ENCODE measurements at regions of chr12 and their contacts with region 1.

Region 1: GRCh38 chr12:116924558-116925453 is 14.1 kb downstream of the FBXW8 start:
- DNase-seq: peak; percentile 66
- H3K4me3 Mint-ChIP-seq: no peak overlapping the region
- H3K27ac Mint-ChIP-seq: no peak overlapping the region
- H3K4me1 Mint-ChIP-seq: peaks cover 42% of the 10 kb centered on the region
- H3K27me3 Mint-ChIP-seq: peaks cover 56% of the 10 kb centered on the region

Region 2: DNA sequence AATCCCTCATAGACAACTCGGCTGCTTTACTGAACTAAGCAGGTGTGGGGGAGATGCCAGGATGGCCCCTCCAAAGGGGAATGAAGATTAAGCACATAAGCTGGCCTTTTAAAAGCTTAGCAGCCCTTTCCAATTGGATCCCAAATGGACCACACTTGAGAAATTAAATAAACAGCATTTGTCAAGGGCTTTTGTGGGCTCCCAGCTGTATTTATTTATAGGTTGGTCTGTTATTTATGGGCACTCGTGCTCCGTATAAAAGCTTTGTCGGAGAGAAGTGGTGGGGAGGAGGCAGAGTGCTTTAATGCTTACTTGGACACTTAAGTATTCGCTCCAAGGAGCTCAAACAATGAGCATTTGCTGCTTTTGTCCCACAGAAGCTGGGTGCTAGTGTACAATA is 1227.5 kb before region 1 on chr12:
- intact Hi-C with region 1: no loop called
- DNase-seq: no peak
- H3K4me3 Mint-ChIP-seq: no peak overlapping the region
- H3K27ac Mint-ChIP-seq: no peak overlapping the region
- H3K4me1 Mint-ChIP-seq: no peaks in the 10 kb centered on the region
- H3K27me3 Mint-ChIP-seq: no peaks in the 10 kb centered on the region

Region 3: DNA sequence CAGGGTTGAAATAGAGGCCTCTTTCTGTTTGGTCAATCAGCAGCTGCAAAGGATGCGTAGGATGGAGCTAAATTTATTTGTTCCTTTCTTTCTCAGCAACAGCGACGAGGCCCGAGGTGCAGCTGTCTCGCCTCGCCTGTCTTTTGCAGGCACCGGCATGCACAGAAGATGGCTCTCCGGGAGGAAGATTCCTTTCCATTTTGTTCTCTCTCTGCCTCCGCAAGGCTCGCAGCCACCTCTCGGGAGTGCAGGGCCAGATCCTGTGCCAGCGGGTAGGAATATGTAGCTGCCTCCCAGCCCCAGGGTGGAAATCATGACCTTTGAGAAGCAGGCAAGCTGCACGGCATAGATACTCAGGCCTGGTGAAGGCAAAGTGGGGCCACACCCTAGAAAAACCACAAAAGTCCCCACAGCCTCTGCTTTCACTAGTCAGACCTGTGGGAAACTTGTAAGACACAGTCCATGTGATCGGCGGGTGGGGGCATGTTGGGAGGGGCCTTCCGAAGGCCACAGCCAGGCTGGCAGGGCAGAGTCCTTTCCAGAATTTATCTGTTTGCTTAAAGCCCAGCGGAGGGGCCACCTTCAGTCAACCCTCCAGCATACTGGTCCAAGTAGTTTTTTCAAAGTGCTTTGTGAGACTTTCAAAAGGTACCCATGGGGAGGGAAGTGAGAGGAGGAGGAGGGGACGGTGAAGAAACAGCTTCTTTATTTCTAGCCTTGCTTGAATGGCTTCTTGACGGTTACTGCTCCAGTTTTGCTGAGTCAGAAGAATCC is 365.5 kb before region 1 on chr12 and contains the start of gene MAP1LC3B2:
- intact Hi-C with region 1: loop called (anchors 10 kb)
- DNase-seq: peak; percentile 86
- H3K4me3 Mint-ChIP-seq: peak within 1 kb of the TSS; percentile 51
- H3K27ac Mint-ChIP-seq: peak within 1 kb of the TSS; percentile 95
- H3K4me1 Mint-ChIP-seq: peaks cover 42% of the 10 kb centered on the region
- H3K27me3 Mint-ChIP-seq: no peaks in the 10 kb centered on the region
- total RNA-seq, gene MAP1LC3B2: 0.37 and 0.60 TPM in 2 replicates

Region 4: DNA sequence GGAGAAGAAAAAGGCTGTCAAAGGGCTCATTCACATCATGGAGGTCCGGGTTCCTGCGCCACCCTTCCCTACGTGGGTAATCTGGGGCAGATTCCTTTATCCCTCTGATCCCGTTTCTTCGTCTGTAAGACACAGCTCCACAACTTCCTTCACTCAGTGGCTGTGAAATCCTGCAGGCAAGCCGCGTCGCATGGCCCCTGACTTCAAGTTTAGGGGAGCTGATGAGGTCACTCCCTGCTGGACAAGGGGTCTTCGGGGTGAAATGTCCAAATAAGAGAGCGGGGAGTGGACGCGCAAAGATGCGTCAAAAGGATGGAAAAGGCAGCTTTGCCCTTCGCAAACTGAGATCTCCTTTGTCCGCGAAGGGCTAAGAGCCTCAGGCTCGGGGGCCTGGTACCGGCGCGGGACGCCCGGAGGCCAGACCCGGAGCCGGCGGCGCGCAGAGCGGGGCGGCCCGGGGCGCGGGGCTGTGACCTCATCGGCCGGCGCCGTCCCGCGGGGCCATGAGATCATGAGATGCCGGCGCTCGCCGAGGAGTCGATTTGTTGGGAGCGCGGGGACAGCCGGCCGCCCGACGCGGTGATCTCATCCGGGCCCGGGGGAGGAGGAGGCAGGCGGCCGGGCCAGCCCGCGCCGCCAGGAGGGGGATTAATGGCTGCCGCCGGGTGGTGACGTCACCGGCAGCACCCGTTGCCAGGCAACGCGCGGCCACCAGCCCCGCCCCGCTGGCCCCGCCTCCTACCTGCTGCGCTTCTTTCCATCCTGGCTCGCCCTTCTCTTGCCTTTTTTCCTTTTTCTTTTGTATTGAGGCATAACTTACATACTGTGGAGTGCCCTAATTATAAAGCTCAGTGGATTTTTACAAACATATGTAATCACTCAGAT is 105.6 kb before region 1 on chr12:
- intact Hi-C with region 1: loop called (anchors 5 kb)
- DNase-seq: peak; percentile 85
- H3K4me3 Mint-ChIP-seq: peak overlapping the region; percentile 95
- H3K27ac Mint-ChIP-seq: peak overlapping the region; percentile 95
- H3K4me1 Mint-ChIP-seq: peaks cover 13% of the 10 kb centered on the region
- H3K27me3 Mint-ChIP-seq: peaks cover 5% of the 10 kb centered on the region

Region 5: DNA sequence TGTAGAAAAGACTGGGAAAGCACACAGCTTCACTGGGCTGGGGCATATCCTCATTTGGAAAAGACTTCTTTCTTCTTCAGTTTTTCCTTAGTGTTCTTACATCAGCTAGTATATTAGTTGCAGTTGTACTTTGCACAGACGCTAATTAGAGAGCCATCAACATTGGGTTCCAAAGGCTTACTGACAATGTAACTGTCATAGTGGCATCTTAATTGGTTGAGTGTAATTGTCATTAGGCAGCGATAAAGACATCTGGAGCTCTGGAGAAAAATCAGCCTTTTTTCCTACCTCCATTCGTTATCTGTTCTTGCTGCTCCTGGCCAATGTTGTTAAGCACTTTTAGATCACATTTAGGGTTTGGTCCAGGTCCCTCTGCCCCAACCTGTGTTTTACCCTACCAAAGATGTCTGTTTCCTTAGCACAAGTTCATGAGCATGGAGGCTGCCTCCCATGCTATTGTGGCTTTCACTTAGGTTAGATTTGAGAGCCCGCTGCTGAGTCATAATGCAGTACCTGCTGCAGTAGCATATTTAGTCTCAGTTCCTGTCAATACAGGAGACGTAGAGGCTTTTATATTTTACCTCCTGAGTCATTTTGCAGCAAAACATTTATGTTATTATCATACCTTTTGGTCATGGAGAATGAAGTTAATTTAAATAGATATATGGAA is 35.2 kb after region 1 on chr12:
- intact Hi-C with region 1: loop called (anchors 1 kb)
- DNase-seq: peak; percentile 24
- H3K4me3 Mint-ChIP-seq: no peak overlapping the region
- H3K27ac Mint-ChIP-seq: no peak overlapping the region
- H3K4me1 Mint-ChIP-seq: peaks cover 31% of the 10 kb centered on the region
- H3K27me3 Mint-ChIP-seq: peaks cover 7% of the 10 kb centered on the region

Region 6: GRCh38 chr12:117134059-117134458 is 209.3 kb after region 1 on chr12:
- intact Hi-C with region 1: loop called (anchors 1 kb)
- DNase-seq: peak; percentile 49
- H3K4me3 Mint-ChIP-seq: peak overlapping the region; percentile 2
- H3K27ac Mint-ChIP-seq: peak overlapping the region; percentile 88
- H3K4me1 Mint-ChIP-seq: peaks cover 12% of the 10 kb centered on the region
- H3K27me3 Mint-ChIP-seq: no peaks in the 10 kb centered on the region